ENCODE measurements at regions of chr3 and their contacts with region 1.

Region 1: DNA sequence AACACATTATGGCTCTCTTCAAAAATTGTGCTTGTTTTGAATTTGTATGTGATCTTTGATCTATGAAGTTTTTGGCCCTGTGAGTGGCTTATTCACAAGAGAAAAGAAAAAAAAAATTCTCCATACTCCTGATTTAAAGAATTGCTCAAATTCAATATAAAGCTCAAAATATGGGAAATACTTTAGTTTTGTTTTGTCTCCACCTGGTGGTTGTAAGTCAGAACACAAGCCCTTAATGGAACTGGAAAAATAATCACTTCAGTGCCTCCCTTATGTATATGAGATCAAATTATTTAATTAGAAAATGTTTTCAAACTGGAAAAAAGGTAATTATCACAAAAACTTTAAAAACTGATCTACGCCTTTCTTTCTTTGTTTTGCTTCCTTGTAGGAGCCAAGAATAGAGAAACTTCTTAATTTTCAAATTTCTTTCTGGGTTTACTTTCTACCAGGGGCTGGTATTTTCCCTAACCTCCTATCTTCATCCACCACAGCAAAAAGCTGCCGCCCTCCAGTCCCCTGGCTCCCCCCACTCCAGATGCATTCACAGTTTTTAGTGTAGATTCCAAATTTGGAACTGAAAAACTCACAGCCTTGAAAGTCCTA is 50.6 kb downstream of the SERP1 start:
- DNase-seq: no peak
- ATAC-seq: no peak
- H3K4me3 Mint-ChIP-seq: no peak overlapping the region
- H3K27ac Mint-ChIP-seq: no peak overlapping the region
- H3K4me1 Mint-ChIP-seq: no peaks in the 10 kb centered on the region
- H3K27me3 Mint-ChIP-seq: no peaks in the 10 kb centered on the region

Region 2: DNA sequence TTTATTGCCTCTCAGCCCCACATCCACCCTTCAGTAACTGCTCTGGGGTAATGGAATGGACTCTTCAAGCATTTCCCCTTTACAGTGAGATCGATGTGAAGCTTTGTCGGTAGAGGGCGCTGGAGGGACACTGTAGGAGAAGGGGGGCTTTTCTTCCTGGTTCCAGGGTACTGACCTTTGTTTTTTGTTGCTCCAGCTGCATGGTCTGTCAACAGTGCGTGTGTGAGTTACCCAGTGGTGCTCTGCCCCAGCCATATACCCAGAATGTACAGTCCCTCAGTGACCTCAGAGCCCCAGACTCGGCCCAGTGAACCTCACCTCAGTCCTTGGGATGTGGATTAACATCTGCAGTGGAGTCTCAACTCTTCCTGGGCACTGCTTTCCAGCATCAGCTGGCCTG is 267.8 kb before region 1 on chr3:
- CTCF ChIA-PET with region 1: interaction called, 11 read pairs
- POLR2A ChIA-PET with region 1: no interaction called
- intact Hi-C with region 1: loop called (anchors 1 to 2 kb)
- DNase-seq: peak; percentile 72
- ATAC-seq: peak; percentile 36
- H3K4me3 Mint-ChIP-seq: no peak overlapping the region
- H3K27ac Mint-ChIP-seq: no peak overlapping the region
- H3K4me1 Mint-ChIP-seq: no peaks in the 10 kb centered on the region
- H3K27me3 Mint-ChIP-seq: peaks cover 11% of the 10 kb centered on the region

Region 3: DNA sequence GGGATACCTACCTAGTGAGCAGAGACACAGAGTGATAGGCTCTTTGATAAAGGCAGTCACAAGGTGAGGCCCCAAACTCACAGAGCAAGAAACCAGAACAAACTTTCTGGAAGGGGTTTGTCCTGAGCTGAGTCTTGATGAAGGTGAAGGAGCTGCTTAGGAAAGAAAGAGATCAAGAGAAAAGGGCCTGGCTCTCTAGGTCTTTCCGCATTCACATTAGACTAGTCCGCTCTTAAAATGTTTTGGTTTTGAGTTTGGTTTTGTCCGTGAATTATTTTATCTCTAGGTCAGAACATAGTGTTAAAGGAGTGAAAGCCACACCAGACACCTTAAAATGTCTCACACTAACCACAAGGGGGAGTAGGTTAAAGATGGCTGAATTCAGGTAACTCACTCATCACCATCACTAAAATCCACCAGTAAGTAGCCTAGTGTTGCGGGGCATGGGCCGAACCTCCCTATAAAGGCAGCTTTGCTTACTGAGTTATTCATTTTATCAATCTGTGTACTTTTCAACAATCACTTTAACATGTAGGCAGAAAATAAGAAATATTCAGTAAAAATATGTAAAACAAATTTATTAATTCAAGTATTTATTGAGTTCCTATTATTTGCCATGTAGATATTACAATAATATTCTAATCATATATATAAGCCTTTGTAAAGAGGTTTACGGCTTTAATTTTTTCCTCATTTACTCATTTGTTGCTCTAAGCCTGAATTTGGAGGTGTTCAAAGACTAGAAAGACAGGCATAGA is 209.1 kb before region 1 on chr3:
- CTCF ChIA-PET with region 1: interaction called, 36 read pairs
- POLR2A ChIA-PET with region 1: no interaction called
- intact Hi-C with region 1: loop called (anchors 1 kb)
- DNase-seq: peak; percentile 9
- ATAC-seq: peak; percentile 58
- H3K4me3 Mint-ChIP-seq: no peak overlapping the region
- H3K27ac Mint-ChIP-seq: no peak overlapping the region
- H3K4me1 Mint-ChIP-seq: no peaks in the 10 kb centered on the region
- H3K27me3 Mint-ChIP-seq: peaks cover 14% of the 10 kb centered on the region

Region 4: DNA sequence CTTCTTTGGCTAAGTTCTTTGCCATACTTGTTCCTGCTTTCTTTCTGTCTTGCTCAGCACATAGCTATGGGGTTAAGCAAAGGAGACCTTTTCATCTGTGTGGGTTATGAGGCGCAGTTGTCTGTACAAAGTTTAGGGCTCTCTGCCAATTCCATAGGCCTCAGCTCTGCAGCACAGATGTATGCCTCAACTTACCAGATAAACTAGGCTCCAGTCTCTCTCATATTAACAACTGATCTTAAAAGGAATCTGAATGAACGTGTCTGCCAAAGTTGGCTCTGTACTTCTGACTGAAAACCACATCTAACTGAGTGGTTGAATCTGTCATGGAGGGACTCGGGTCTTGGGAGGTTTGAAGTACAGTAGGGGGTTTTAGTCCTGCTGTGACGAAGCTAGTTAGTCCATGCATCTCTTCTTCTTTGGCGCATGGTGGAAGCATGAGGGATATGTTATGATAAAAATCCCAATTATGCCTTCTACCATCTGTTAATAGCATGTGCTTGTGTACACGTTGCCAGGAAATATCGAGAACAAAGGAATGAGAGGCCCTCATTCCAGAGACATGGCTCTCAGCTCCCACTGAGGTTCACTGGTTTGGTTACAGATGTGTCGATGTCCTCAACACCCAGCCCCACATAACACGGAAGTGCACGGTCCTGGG is 202.1 kb before region 1 on chr3:
- CTCF ChIA-PET with region 1: interaction called, 16 read pairs
- POLR2A ChIA-PET with region 1: no interaction called
- intact Hi-C with region 1: no loop called
- DNase-seq: no peak
- ATAC-seq: no peak
- H3K4me3 Mint-ChIP-seq: no peak overlapping the region
- H3K27ac Mint-ChIP-seq: no peak overlapping the region
- H3K4me1 Mint-ChIP-seq: no peaks in the 10 kb centered on the region
- H3K27me3 Mint-ChIP-seq: peaks cover 7% of the 10 kb centered on the region

Region 5: GRCh38 chr3:150303776-150304175 is 191.9 kb before region 1 on chr3:
- CTCF ChIA-PET with region 1: interaction called, 4 read pairs
- POLR2A ChIA-PET with region 1: interaction called, 3 read pairs
- intact Hi-C with region 1: loop called in 1 of 2 experiments (anchors 5 kb)
- DNase-seq: peak; percentile 47
- ATAC-seq: peak; percentile 75
- H3K4me3 Mint-ChIP-seq: no peak overlapping the region
- H3K27ac Mint-ChIP-seq: no peak overlapping the region
- H3K4me1 Mint-ChIP-seq: no peaks in the 10 kb centered on the region
- H3K27me3 Mint-ChIP-seq: peaks cover 20% of the 10 kb centered on the region

Region 6: DNA sequence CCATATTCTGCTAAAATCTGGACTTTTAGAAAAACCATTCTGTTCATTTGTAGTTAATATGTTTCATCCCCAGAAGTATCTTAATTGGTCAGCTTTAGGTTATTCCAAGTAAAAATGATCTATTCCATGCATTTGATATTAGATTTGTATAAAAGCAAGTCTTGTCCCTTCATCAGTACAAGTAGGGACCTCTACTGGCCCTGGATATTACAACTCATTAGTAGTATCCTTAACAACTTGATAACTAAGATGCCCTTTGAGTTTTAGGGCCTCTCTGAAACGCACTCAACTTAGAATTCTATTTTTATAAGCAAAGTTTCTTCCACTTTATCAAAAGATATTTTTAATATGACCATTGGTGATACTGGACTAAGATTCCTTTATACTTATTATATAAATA is 82.2 kb after region 1 on chr3:
- CTCF ChIA-PET with region 1: no interaction called
- POLR2A ChIA-PET with region 1: no interaction called
- intact Hi-C with region 1: no loop called
- DNase-seq: no peak
- ATAC-seq: no peak
- H3K4me3 Mint-ChIP-seq: no peak overlapping the region
- H3K27ac Mint-ChIP-seq: no peak overlapping the region
- H3K4me1 Mint-ChIP-seq: peaks cover 16% of the 10 kb centered on the region
- H3K27me3 Mint-ChIP-seq: no peaks in the 10 kb centered on the region

Region 7: DNA sequence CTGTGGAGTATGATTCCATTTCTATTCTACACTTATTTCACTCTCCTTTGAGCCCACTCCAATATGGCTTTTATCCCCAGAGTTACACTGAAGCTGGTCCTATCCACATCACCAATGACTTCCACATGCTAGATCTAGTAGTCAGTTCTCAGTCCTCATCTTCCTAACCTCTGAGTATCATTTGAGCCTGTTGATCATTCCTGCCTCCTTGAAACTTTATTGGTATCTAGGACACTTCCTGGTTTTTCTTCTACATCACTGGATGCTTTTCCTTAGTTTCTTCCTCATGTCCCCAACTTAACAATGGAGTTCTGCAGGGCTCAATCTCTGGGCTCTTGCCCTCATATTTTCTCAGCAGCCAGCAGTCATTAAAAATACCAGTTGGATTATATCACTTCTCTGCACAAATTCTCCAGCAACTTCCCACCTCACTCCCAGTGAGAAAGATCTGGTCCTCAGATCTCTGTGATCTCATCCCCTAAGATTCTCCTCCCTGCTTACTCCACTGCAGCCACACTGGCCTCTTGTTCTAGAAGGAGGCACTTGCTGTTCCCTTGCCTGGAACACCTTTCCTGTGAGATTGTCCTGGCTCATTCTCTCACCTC is 201.8 kb after region 1 on chr3:
- CTCF ChIA-PET with region 1: no interaction called
- POLR2A ChIA-PET with region 1: no interaction called
- intact Hi-C with region 1: no loop called
- DNase-seq: no peak
- ATAC-seq: no peak
- H3K4me3 Mint-ChIP-seq: no peak overlapping the region
- H3K27ac Mint-ChIP-seq: no peak overlapping the region
- H3K4me1 Mint-ChIP-seq: peaks cover 11% of the 10 kb centered on the region
- H3K27me3 Mint-ChIP-seq: no peaks in the 10 kb centered on the region

Measured in activated CD4-positive, alpha-beta T cell treated with anti-CD3 and anti-CD28 coated beads for 36 hours (primary cell).